ENCODE measurements at regions of chr16 and their contacts with region 1.

Region 1: DNA sequence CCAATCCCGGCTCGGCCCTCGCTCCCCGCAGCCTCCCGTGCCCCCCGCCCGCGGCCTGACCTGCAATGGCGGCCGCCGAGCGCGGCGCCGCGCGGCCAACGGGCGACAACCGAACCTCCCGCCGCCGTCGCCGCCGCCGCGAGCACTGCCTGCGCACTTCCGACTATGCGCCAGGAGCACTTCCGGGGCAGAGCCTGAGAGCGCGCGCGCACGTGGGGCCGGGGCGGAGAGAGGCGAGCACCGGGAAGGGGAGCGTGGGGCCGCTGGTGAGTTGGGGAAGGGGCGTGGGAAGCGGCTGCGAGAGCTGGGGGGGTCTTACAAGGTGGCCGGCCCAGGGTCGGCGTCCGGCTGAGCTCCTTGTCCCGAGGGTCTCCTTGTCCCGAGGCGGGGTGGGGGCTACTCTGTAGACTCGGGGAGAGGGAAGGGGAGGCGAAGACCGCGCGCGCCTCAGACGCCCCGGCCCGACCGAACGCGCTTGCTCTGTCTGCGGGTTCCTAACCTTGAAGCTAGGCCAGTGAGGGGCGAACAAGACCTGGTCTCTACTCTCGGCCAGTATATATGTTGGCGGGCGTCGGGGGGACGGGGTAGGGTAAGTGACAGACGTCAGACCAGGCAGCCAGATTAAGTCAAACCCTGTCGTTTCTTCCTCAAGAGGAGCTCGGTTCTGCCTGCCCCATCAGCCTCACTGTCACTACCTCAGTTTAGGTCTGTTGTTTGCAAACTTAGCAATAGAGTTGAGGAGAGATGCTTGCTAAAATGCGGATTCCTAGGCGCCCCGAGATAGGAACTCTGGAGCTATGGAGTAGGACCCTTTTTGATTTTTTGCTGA is at the starts of genes CHTF8 and UTP4:
- DNase-seq: peak; percentile 91
- ATAC-seq: peak; percentile 92
- H3K4me3 Mint-ChIP-seq: peak within 1 kb of the TSS; percentile 88
- H3K27ac Mint-ChIP-seq: peak within 1 kb of the TSS; percentile 93
- H3K4me1 Mint-ChIP-seq: peaks cover 51% of the 10 kb centered on the region
- H3K27me3 Mint-ChIP-seq: no peaks in the 10 kb centered on the region
- CTCF ChIP-seq: no peak
- total RNA-seq, gene CHTF8: 111 to 115 TPM
- total RNA-seq, gene UTP4: 112 to 121 TPM

Region 2: GRCh38 chr16:68843482-68844210 is 289.0 kb before region 1 on chr16 and contains the start of gene TANGO6:
- CTCF ChIA-PET with region 1: interaction called, 3 read pairs
- POLR2A ChIA-PET with region 1: interaction called, 3 read pairs
- intact Hi-C with region 1: loop called (anchors 5 kb)
- DNase-seq: peak; percentile 95
- ATAC-seq: peak; percentile 93
- H3K4me3 Mint-ChIP-seq: peak within 1 kb of the TSS; percentile 92
- H3K27ac Mint-ChIP-seq: peak within 1 kb of the TSS; percentile 93
- H3K4me1 Mint-ChIP-seq: peaks cover 21% of the 10 kb centered on the region
- H3K27me3 Mint-ChIP-seq: no peaks in the 10 kb centered on the region
- CTCF ChIP-seq: peak; percentile 18
- total RNA-seq, gene TANGO6: 23.0 to 27.0 TPM

Region 3: GRCh38 chr16:69112285-69113129 is 20.1 kb before region 1 on chr16:
- CTCF ChIA-PET with region 1: interaction called, 14 read pairs
- POLR2A ChIA-PET with region 1: interaction called, 4 read pairs
- intact Hi-C with region 1: no loop called
- DNase-seq: peak; percentile 74
- ATAC-seq: peak; percentile 91
- H3K4me3 Mint-ChIP-seq: no peak overlapping the region
- H3K27ac Mint-ChIP-seq: no peak overlapping the region
- H3K4me1 Mint-ChIP-seq: peaks cover under 1% of the 10 kb centered on the region
- H3K27me3 Mint-ChIP-seq: peaks cover 13% of the 10 kb centered on the region
- CTCF ChIP-seq: peak; percentile 79

Measured in activated CD8-positive, alpha-beta T cell treated with anti-CD3 and anti-CD28 coated beads for 36 hours (primary cell).